Activated CD4-positive, alpha-beta memory T cell treated with anti-CD3 and anti-CD28 coated beads, Interleukin-2, amount 10 ng/mL, durations not matched to agents 7 days and 5 days (primary cell): ENCODE measurements at regions of chr12 and their contacts with region 1.

Region 1: GRCh38 chr12:109093022-109093918 is at the start of gene ALKBH2:
- DNase-seq: peak; percentile 94
- H3K4me3 Mint-ChIP-seq: peak within 1 kb of the TSS; percentile 73
- H3K27ac Mint-ChIP-seq: peak within 1 kb of the TSS; percentile 44
- H3K4me1 Mint-ChIP-seq: peaks cover 45% of the 10 kb centered on the region
- H3K27me3 Mint-ChIP-seq: no peaks in the 10 kb centered on the region
- total RNA-seq, gene ALKBH2: 8.2 to 8.7 TPM

Region 2: GRCh38 chr12:108701779-108702441 is 391.4 kb before region 1 on chr12:
- CTCF ChIA-PET with region 1: no interaction called
- POLR2A ChIA-PET with region 1: no interaction called
- DNase-seq: no peak
- H3K4me3 Mint-ChIP-seq: no peak overlapping the region
- H3K27ac Mint-ChIP-seq: no peak overlapping the region
- H3K4me1 Mint-ChIP-seq: peaks cover 20% of the 10 kb centered on the region
- H3K27me3 Mint-ChIP-seq: peaks cover 2% of the 10 kb centered on the region

Region 3: DNA sequence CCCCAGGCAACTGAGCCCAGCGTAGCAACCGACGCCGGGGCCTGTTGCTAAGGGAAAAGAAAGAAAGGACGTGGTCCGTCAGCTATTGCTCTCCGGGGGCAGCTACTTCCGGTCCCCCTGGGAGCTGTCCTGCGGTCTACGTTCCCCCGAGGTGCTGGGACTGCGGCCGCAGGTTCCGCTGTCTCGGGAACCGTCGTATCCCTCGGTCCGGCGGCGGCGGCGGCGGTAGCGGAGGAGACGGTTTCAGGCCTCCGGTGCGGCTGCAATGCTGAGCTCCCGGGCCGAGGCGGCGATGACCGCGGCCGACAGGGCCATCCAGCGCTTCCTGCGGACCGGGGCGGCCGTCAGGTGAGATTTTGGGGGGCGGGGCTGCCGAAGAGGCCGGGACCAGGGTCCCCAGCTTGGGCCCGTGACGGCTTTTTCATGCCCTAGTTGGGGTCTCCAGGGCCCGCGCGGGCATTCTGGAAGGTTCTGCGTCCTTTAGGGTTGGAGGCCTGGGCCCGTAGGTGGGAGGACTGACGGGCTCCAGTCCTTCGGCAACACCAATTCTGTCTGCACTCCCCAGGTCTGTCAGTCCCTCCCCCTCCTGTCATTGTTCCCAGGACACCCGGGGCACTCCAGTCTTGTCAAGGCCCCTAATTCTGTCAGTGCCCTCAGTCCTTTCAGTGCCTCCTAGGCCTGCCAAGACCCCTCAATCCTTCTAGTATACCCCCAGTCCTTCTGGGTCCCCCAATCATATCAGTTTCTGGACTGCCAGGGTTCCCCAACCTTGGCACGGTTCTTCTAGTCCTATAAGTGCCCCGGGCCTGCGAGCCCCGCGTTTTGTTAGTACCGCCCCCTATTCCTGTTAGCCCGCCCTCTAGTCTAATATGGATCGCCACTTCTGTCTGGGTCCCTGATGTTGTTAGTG is 40.6 kb before region 1 on chr12 and contains the start of gene USP30:
- CTCF ChIA-PET with region 1: interaction called, 12 read pairs
- POLR2A ChIA-PET with region 1: interaction called, 13 read pairs
- DNase-seq: peak; percentile 85
- H3K4me3 Mint-ChIP-seq: peak within 1 kb of the TSS; percentile 85
- H3K27ac Mint-ChIP-seq: peak within 1 kb of the TSS; percentile 91
- H3K4me1 Mint-ChIP-seq: peaks cover 16% of the 10 kb centered on the region
- H3K27me3 Mint-ChIP-seq: no peaks in the 10 kb centered on the region
- total RNA-seq, gene USP30: 6.9 to 13.7 TPM